ENCODE measurements at regions of chr20 and their contacts with region 1.

Region 1: GRCh38 chr20:62772990-62773844 is 23.1 kb upstream of the MRGBP start:
- DNase-seq: peak in 1 of 5 donors; percentile 16
- ATAC-seq: no peak
- H3K4me3 ChIP-seq: no peak overlapping the region
- H3K27ac ChIP-seq: no peak overlapping the region
- H3K4me1 ChIP-seq: peaks cover 0 to 18% (median 0%) of the 10 kb centered on the region in 12 donors
- H3K27me3 ChIP-seq: peaks cover 0 to 15% (median 0%) of the 10 kb centered on the region in 9 donors
- CTCF ChIP-seq: no peak
- POLR2A ChIP-seq: no peak

Region 2: DNA sequence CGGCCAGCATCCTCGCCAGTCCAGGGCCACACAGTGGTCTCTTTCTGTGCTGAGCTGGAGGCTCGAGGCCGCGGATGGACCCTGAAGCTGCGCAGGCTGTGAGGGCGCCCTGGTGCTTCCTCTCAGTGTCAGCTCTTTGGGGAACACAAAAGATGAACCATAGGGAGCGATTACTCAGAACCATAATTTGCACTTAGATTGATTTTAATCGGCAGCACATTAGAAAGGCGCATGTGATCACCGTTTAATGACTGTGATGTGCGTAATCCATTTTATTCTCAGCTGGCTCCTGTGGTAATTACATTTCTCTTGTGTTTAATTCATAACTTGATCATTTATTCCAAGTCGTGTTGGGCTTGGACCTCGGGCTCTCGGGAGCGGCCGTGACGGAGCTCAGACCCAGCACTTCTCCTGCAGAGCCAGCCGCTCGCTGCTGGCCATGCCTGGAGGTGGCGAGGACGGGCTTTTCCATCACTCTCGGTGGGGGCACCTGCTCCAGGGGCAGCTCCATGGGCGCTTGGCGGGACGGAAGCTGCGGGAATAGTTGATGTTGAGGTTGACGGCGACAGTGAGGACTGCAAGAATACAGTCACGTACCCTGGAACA is 90.2 kb before region 1 on chr20:
- intact Hi-C with region 1: loop called in 1 of 10 experiments (anchors 5 kb)
- DNase-seq: no peak
- ATAC-seq: no peak
- H3K4me3 ChIP-seq: no peak overlapping the region
- H3K27ac ChIP-seq: no peak overlapping the region
- H3K4me1 ChIP-seq: peaks cover 0 to 24% (median 0%) of the 10 kb centered on the region in 12 donors
- H3K27me3 ChIP-seq: peaks cover 0 to 47% (median 9%) of the 10 kb centered on the region in 9 donors
- CTCF ChIP-seq: no peak
- POLR2A ChIP-seq: no peak

Region 3: GRCh38 chr20:62710886-62711493 is 62.2 kb before region 1 on chr20:
- intact Hi-C with region 1: loop called in 1 of 10 experiments (anchors 5 kb)
- DNase-seq: peak in 1 of 5 donors; percentile 31
- ATAC-seq: no peak
- H3K4me3 ChIP-seq: no peak overlapping the region
- H3K27ac ChIP-seq: peak overlapping the region in 1 of 12 donors; percentile 73
- H3K4me1 ChIP-seq: peaks cover 0 to 23% (median 0%) of the 10 kb centered on the region in 12 donors
- H3K27me3 ChIP-seq: peaks cover 28 to 56% (median 39%) of the 10 kb centered on the region in 9 donors
- CTCF ChIP-seq: no peak
- POLR2A ChIP-seq: no peak

Region 4: GRCh38 chr20:62953839-62954703 is 180.9 kb after region 1 on chr20:
- intact Hi-C with region 1: no loop called
- DNase-seq: peak; percentile 78 to 86 (median 82)
- ATAC-seq: peak; percentile 41 to 81 (median 64)
- H3K4me3 ChIP-seq: peak overlapping the region in 10 of 12 donors; percentile 14 to 52 (median 36)
- H3K27ac ChIP-seq: peak overlapping the region in 11 of 12 donors; percentile 43 to 95 (median 78)
- H3K4me1 ChIP-seq: peaks cover 3 to 39% (median 25%) of the 10 kb centered on the region in 12 donors
- H3K27me3 ChIP-seq: no peaks in the 10 kb centered on the region
- CTCF ChIP-seq: no peak
- POLR2A ChIP-seq: no peak

Measured in heart left ventricle (tissue), 16 donors.